ENCODE measurements at regions of chr16 and their contacts with region 1.

Region 1: DNA sequence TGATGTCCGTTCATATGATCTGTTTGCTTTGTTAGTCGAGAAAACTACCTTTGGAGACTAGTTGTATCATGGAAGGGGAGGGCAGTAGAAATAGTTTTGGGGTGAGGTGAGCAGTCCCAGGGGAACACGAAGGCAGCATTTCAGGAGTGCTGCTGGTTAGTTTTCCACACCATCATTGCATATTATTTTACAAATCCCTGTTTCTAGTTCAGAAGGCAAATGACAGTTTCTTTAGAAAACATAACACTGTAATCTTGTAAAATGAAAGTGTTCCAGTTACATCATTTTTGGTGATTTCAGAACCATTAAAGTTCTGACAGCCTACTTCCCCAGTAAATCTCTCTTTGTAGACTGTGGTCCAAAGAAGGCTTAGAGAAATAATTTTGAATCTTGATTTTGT is 25.4 kb downstream of the BANP start:
- DNase-seq: no peak
- H3K4me3 Mint-ChIP-seq: no peak overlapping the region
- H3K27ac Mint-ChIP-seq: no peak overlapping the region
- H3K4me1 Mint-ChIP-seq: peaks cover 41% of the 10 kb centered on the region
- H3K27me3 Mint-ChIP-seq: no peaks in the 10 kb centered on the region

Region 2: DNA sequence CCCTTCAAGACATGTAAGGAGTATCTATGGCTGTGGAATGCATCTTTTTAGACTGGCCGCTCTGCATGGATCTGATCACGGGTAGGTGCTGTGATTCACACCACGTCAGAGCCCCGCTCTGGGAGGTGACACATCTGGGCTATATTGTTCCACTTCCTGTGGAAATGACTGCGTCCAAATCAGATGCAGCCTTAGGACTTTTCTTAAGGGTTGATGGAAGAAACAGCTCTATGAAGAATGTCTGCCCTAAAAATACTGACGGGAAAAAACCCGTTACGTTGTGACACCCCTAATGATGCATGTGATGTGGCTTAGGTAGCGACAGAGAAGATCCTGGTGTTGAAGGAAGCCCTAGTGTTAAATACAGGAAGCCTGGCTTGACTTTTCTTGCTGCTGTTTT is 13.3 kb before region 1 on chr16:
- intact Hi-C with region 1: loop called (anchors 1 kb)
- DNase-seq: peak; percentile 47
- H3K4me3 Mint-ChIP-seq: peak overlapping the region; percentile 37
- H3K27ac Mint-ChIP-seq: peak overlapping the region; percentile 92
- H3K4me1 Mint-ChIP-seq: peaks cover 47% of the 10 kb centered on the region
- H3K27me3 Mint-ChIP-seq: no peaks in the 10 kb centered on the region

Region 3: GRCh38 chr16:88941913-88942909 is 965.5 kb after region 1 on chr16:
- intact Hi-C with region 1: no loop called
- DNase-seq: peak; percentile 36
- H3K4me3 Mint-ChIP-seq: peak overlapping the region; percentile 26
- H3K27ac Mint-ChIP-seq: no peak overlapping the region
- H3K4me1 Mint-ChIP-seq: no peaks in the 10 kb centered on the region
- H3K27me3 Mint-ChIP-seq: peaks cover 31% of the 10 kb centered on the region

Measured in activated T-helper 1 cell treated with anti-CD3 and anti-CD28 coated beads, Interleukin-12 subunit alpha, Interleukin-12 subunit beta, Interleukin-2, Interleukin-4 antibody, amounts not matched to agents 30 ng/mL and 10 ng/mL and 1 ng/mL, durations not matched to agents 14 hours and 24 hours and 36 hours (primary cell).